Heart left ventricle (tissue), 16 donors: ENCODE measurements at regions of chr2 and their contacts with region 1.

Region 1: DNA sequence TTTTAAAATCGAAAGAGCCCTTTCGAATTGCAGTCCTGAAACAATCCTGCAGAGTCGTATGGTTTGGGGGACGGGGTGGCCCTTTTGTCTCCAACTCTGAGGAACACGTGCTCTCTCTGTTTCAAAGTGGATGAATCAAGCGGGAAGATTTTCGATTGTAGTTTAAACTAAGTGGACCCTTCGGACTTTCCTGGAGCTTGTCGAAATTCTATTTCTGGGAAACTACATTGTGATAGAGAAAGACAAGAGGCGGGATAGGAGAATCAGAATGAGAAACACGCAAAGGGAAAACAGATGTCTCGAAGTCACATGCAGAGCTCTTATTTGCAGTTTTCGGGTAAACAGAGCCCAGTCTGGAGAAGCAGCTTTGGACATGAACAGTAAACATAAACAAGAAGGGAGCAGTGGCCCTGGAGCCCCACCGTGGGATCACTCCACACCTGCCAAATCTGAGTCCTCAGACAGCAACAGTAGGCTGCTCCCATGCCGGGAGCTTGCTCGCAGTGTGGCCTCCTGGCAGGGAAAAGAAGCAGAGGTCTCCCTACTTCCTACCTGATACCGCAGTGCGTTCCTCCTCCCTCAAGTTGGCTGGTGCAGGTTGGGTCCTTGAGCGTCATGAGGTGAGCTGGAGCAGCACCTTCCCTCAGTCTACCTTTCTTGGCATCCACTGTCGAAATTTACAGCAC is 202.4 kb downstream of the SLC4A3 start:
- DNase-seq: no peak
- ATAC-seq: no peak
- H3K4me3 ChIP-seq: no peak overlapping the region
- H3K27ac ChIP-seq: no peak overlapping the region
- H3K4me1 ChIP-seq: no peaks in the 10 kb centered on the region
- H3K27me3 ChIP-seq: no peaks in the 10 kb centered on the region
- CTCF ChIP-seq: no peak
- POLR2A ChIP-seq: no peak

Region 2: DNA sequence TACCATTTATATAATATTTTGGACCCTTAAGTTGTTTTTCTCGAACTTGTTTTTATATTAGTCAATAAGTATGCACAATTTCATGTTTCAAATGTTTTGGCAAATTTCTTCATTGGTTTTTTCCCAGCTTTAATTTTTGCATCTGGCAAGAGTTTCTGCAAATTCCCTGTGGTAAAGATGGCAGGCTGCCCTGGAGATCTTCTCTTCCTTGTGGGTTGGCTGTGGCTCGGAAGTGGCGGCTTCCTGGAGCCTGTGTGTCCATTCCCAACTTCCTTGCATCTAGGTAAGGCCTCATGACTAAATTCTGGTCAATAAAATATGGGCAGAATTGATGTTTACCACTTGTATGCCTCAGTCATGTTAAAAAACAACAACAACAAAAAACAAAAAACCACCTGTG is 923.7 kb after region 1 on chr2:
- intact Hi-C with region 1: no loop called
- DNase-seq: no peak
- ATAC-seq: no peak
- H3K4me3 ChIP-seq: no peak overlapping the region
- H3K27ac ChIP-seq: no peak overlapping the region
- H3K4me1 ChIP-seq: peaks cover 0 to 7% (median 0%) of the 10 kb centered on the region in 12 donors
- H3K27me3 ChIP-seq: no peaks in the 10 kb centered on the region
- CTCF ChIP-seq: no peak
- POLR2A ChIP-seq: no peak

Region 3: DNA sequence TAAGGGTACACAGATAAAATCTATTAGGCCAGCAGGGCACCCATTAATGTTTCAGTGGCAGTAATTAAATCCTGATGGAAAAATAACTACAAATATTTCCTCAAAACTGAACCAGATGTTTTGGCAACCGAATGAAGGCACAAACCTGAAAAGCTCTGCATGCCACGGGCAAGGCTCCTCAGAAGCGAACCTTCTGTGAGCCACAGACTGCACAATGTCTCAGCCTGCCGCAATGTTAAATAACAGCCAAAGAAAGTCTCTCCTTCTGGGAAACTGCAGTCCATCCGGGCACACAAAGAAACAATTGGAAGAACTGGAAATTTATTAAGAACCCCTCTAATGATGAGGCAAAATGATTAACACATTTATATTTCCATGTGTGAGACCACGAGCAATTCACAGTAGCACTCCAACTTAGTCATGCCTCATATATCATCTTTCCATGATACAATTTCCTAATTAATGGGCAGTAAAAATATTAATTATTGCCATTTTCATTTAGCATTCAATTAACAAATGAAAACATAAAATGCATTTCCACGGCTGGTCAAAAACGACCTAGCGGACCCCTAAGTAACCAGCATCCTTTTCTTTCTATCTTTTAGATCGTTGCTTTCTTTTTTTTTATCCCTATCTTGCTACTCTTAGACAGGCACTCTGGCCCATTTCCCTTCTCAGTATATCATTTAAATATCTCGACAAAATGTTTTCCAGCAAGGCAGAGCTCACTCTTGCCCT is 1504.8 kb after region 1 on chr2:
- intact Hi-C with region 1: loop called in 1 of 10 experiments (anchors 5 kb)
- DNase-seq: no peak
- ATAC-seq: no peak
- H3K4me3 ChIP-seq: no peak overlapping the region
- H3K27ac ChIP-seq: no peak overlapping the region
- H3K4me1 ChIP-seq: no peaks in the 10 kb centered on the region
- H3K27me3 ChIP-seq: no peaks in the 10 kb centered on the region
- CTCF ChIP-seq: no peak
- POLR2A ChIP-seq: no peak